Activated CD4-positive, alpha-beta T cell treated with anti-CD3 and anti-CD28 coated beads, Interleukin-2, amount 10 ng/mL, durations not matched to agents 24 days and 14 days (primary cell): ENCODE measurements at regions of chr7 and their contacts with region 1.

Region 1: GRCh38 chr7:111029574-111030251 is 61.2 kb upstream of the LRRN3 start:
- DNase-seq: peak; percentile 75
- H3K4me3 Mint-ChIP-seq: peak overlapping the region; percentile 68
- H3K27ac Mint-ChIP-seq: peak overlapping the region; percentile 96
- H3K4me1 Mint-ChIP-seq: peaks cover 54% of the 10 kb centered on the region
- H3K27me3 Mint-ChIP-seq: no peaks in the 10 kb centered on the region

Region 2: GRCh38 chr7:110977127-110977737 is 52.5 kb before region 1 on chr7:
- intact Hi-C with region 1: loop called (anchors 1 kb)
- DNase-seq: peak; percentile 62
- H3K4me3 Mint-ChIP-seq: peak overlapping the region; percentile 40
- H3K27ac Mint-ChIP-seq: peak overlapping the region; percentile 38
- H3K4me1 Mint-ChIP-seq: peaks cover 25% of the 10 kb centered on the region
- H3K27me3 Mint-ChIP-seq: no peaks in the 10 kb centered on the region

Region 3: DNA sequence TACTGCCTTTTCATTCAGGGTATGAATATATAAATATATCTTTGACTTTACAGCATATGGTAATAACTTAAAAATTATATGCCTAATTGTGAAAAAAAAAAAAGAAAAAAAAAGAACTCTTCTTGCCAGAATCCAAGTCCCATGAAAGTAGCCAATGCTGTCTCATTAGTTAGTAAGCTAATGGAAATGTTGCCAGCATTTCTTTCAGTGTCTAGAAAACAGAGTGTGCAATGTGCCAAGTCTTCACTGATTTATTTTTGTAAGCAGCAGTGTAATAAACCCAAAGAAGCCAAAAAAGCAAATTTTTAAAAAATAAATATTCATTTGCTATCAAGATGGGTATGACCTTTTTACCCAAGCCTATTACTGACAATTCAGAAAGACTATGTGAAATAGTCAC is 30.1 kb after region 1 on chr7:
- intact Hi-C with region 1: no loop called
- DNase-seq: no peak
- H3K4me3 Mint-ChIP-seq: no peak overlapping the region
- H3K27ac Mint-ChIP-seq: no peak overlapping the region
- H3K4me1 Mint-ChIP-seq: peaks cover 11% of the 10 kb centered on the region
- H3K27me3 Mint-ChIP-seq: no peaks in the 10 kb centered on the region

Region 4: DNA sequence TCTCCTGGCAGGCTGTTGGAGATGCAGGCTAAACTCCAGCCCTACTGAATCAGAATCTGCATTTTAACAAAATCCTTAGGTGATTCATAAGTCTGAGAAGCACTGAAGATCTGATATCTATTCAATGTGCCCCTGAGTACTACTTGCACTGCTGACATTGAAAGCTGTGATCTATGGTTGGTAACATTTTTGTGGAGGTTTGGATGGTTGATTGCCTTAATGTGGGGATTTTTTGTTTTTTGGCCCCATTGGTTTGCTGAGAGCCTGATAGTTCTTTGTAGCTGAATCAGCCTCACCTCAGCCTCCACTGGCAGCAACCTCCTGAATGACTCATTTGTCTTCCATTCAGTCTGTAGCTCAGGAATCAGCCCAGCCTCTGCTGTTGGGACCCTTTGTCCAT is 46.5 kb after region 1 on chr7:
- intact Hi-C with region 1: loop called (anchors 1 kb)
- DNase-seq: peak; percentile 75
- H3K4me3 Mint-ChIP-seq: peak overlapping the region; percentile 48
- H3K27ac Mint-ChIP-seq: peak overlapping the region; percentile 89
- H3K4me1 Mint-ChIP-seq: peaks cover 54% of the 10 kb centered on the region
- H3K27me3 Mint-ChIP-seq: no peaks in the 10 kb centered on the region

Region 5: DNA sequence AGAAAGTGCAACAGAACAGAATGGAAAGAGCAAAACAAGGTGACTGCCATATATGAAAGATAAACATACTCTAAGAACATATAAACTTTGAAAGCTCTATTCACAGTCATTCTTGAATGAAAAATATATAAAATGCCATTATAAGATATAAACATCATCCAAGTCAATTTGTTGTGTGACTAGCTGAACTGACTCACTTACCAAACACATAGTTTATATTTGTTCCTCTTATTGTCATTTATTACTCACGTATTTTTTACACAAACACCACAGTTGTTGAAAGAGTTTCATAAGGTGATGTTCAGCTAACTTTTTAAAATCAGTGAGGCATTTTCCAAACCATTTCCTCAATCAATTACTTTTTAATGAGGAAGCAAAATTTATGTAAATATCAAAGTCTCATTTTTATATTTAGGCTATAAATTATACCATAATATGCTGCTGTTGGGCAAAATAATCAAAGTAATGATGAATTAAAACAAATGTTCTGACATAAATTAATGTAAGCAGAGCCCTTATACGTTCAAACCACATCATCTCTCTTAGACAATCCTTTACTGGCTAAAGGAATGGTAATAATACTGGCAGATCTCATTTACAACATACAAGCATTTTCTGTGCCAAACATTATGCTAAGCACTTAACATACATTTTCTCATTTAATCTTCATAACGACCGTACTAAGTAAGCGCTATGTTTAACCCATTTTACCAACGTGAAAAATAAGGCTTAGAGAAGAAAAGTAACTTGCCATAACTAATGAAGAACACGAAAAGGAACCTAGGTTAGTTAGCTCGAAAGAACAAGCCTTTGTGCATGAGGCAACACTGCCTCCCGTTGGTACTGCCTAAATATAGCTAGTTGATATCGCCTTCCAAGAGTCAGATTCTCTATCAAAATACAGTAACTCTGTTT is 68.6 kb after region 1 on chr7:
- intact Hi-C with region 1: loop called (anchors 1 kb)
- DNase-seq: peak; percentile 90
- H3K4me3 Mint-ChIP-seq: peak overlapping the region; percentile 79
- H3K27ac Mint-ChIP-seq: peak overlapping the region; percentile 62
- H3K4me1 Mint-ChIP-seq: peaks cover 58% of the 10 kb centered on the region
- H3K27me3 Mint-ChIP-seq: no peaks in the 10 kb centered on the region

Region 6: DNA sequence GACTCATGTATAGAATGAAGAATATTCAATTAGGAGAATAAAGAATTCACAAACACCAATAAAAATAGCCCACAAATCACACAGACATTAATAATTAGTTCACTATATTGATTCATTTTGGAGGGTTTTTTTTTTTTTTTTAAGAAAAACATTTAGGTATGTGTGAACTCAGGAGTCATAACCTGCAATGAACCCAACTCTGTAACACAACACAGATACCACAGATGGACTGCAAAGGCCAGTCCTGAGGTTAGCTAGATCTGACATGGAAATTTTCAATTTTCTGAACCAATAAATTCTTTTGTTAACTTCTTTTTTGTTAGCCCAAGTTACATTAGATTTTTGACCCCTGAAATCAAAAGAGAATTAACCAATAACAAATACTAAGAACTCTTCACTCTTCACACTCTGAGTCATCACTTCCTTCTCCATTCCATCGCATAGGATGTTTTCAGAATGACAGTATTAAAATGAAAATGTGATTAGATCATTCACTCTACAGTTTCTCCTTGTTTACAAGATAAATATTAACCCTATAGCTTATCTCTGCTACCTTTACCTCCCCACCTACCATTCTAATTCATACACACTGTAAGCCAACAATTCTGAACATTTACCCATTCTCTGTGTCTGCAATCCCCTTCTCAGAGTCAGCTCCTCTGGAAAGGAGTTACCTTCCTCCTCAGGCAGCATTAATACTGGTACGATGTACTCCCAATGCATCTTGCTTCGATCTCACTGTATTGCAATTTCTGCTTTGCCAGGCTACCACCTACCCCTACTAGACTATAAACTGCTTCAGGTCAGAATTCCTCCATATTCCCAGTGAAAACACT is 202.8 kb after region 1 on chr7:
- intact Hi-C with region 1: loop called (anchors 5 kb)
- DNase-seq: no peak
- H3K4me3 Mint-ChIP-seq: no peak overlapping the region
- H3K27ac Mint-ChIP-seq: no peak overlapping the region
- H3K4me1 Mint-ChIP-seq: peaks cover 11% of the 10 kb centered on the region
- H3K27me3 Mint-ChIP-seq: no peaks in the 10 kb centered on the region